Endothelial cell of umbilical vein (primary cell): ENCODE measurements at regions of chr14 and their contacts with region 1.

Region 1: DNA sequence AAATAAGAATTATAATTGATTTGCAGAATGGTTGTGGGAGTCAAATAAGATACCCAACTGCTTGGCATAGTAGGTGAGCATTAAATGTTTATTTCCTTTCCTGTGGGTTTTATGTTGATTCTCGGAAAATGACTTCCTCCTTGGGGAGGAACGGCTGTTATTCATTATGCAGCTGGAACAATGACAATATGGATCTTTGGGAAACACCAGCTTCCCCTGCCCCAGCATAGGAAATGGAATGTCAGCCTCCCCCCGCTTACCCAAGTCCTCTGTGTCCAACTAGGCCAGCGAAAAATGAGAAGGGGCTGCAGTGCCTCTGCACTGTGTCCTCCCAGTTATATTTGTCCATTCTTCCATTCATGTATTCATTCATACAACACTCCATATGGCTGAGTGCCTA is 11.7 kb upstream of the CCDC177 start:
- DNase-seq: peak; percentile 90
- H3K4me3 ChIP-seq: no peak overlapping the region
- H3K27ac ChIP-seq: no peak overlapping the region
- H3K4me1 ChIP-seq: peaks cover 20% of the 10 kb centered on the region
- H3K27me3 ChIP-seq: no peaks in the 10 kb centered on the region
- CTCF ChIP-seq: no peak
- POLR2A ChIP-seq: no peak

Region 2: GRCh38 chr14:69214393-69214792 is 372.0 kb before region 1 on chr14:
- CTCF ChIA-PET with region 1: no interaction called
- POLR2A ChIA-PET with region 1: no interaction called
- dilution Hi-C with region 1: no loop called
- intact Hi-C with region 1: no loop called
- DNase-seq: no peak
- H3K4me3 ChIP-seq: no peak overlapping the region
- H3K27ac ChIP-seq: no peak overlapping the region
- H3K4me1 ChIP-seq: no peaks in the 10 kb centered on the region
- H3K27me3 ChIP-seq: no peaks in the 10 kb centered on the region
- CTCF ChIP-seq: no peak
- POLR2A ChIP-seq: no peak

Region 3: GRCh38 chr14:69547701-69548348 is 38.6 kb before region 1 on chr14:
- CTCF ChIA-PET with region 1: interaction called, 14 read pairs
- POLR2A ChIA-PET with region 1: no interaction called
- dilution Hi-C with region 1: no loop called
- intact Hi-C with region 1: no loop called
- DNase-seq: no peak
- H3K4me3 ChIP-seq: no peak overlapping the region
- H3K27ac ChIP-seq: no peak overlapping the region
- H3K4me1 ChIP-seq: no peaks in the 10 kb centered on the region
- H3K27me3 ChIP-seq: peaks cover 4 to 14% of the 10 kb centered on the region in 2 experiments
- CTCF ChIP-seq: peak; percentile 76 to 77
- POLR2A ChIP-seq: no peak

Region 4: GRCh38 chr14:69766984-69767368 is 180.6 kb after region 1 on chr14 and contains the start of gene SRSF5:
- CTCF ChIA-PET with region 1: interaction called, 6 read pairs
- POLR2A ChIA-PET with region 1: no interaction called
- dilution Hi-C with region 1: no loop called
- intact Hi-C with region 1: loop called (anchors 2 kb)
- DNase-seq: peak; percentile 97
- H3K4me3 ChIP-seq: peak within 1 kb of the TSS; percentile 24 to 98 (median 76)
- H3K27ac ChIP-seq: peak within 1 kb of the TSS; percentile 88
- H3K4me1 ChIP-seq: peaks cover 27% of the 10 kb centered on the region
- H3K27me3 ChIP-seq: no peaks in the 10 kb centered on the region
- CTCF ChIP-seq: no peak
- POLR2A ChIP-seq: peak; percentile 99
- total RNA-seq, gene SRSF5: 253 and 276 TPM in 2 replicates